Activated naive CD4-positive, alpha-beta T cell treated with anti-CD3 and anti-CD28 coated beads, Interleukin-2, amount 10 ng/mL, durations not matched to agents 7 days and 5 days (primary cell): ENCODE measurements at regions of chr10 and their contacts with region 1.

Region 1: DNA sequence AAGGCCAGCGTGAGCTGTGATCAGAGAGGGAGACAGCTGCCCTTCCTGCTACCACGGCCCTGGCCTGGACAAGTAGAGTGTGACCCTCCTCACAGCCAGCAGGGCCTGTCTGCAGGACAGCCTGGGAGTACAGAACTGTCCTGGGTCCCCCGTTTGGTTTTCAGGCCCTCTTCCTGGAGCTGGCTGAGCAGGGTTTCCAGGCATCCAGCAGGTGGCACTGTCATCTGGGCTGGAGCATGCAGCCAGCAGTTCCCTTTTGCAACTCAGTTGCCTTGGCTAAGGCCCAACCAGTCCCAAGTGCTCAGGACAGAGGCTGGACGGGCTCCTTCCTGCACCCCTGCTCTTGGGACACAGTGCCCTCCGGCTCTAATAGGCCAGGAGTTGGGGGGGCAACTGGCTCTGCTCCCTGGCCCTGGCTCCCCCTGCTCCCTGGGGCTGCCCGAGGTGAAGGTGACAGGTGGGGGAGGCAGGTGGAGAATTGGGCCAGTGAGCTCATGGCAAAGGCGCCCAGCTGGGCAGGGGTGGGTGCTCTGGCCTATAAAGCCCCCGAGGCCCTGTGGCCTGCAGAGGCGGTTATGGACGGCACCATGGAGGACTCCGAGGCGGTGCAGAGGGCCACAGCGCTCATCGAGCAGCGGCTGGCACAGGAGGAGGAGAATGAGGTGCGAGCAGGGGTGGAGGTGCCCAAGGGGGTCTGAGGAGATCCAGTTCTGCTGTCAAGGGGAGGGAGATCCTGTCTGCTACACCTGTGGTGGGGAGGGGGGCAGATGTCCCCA is at the start of gene ANKRD2:
- DNase-seq: peak; percentile 74
- H3K4me3 Mint-ChIP-seq: no peak within 1 kb of the TSS
- H3K27ac Mint-ChIP-seq: peak within 1 kb of the TSS; percentile 49
- H3K4me1 Mint-ChIP-seq: no peaks in the 10 kb centered on the region
- H3K27me3 Mint-ChIP-seq: peaks cover 13% of the 10 kb centered on the region

Region 2: GRCh38 chr10:97612386-97612785 is 40.0 kb after region 1 on chr10:
- CTCF ChIA-PET with region 1: interaction called, 15 read pairs
- DNase-seq: no peak
- H3K4me3 Mint-ChIP-seq: no peak overlapping the region
- H3K27ac Mint-ChIP-seq: no peak overlapping the region
- H3K4me1 Mint-ChIP-seq: no peaks in the 10 kb centered on the region
- H3K27me3 Mint-ChIP-seq: no peaks in the 10 kb centered on the region